A673 (cell line): ENCODE measurements at regions of chr5 and their contacts with region 1.

Region 1: GRCh38 chr5:177973066-177973635 is 22.9 kb downstream of the PROP1 start:
- DNase-seq: no peak
- H3K4me3 ChIP-seq: no peak overlapping the region
- H3K27ac ChIP-seq: no peak overlapping the region
- H3K4me1 ChIP-seq: no peaks in the 10 kb centered on the region
- H3K27me3 ChIP-seq: no peaks in the 10 kb centered on the region
- CTCF ChIP-seq: no peak

Region 2: GRCh38 chr5:176590035-176590717 is 1383.0 kb before region 1 on chr5:
- CTCF ChIA-PET with region 1: no interaction called
- POLR2A ChIA-PET with region 1: no interaction called
- intact Hi-C with region 1: no loop called
- DNase-seq: no peak
- H3K4me3 ChIP-seq: no peak overlapping the region
- H3K27ac ChIP-seq: no peak overlapping the region
- H3K4me1 ChIP-seq: no peaks in the 10 kb centered on the region
- H3K27me3 ChIP-seq: no peaks in the 10 kb centered on the region
- CTCF ChIP-seq: no peak

Region 3: DNA sequence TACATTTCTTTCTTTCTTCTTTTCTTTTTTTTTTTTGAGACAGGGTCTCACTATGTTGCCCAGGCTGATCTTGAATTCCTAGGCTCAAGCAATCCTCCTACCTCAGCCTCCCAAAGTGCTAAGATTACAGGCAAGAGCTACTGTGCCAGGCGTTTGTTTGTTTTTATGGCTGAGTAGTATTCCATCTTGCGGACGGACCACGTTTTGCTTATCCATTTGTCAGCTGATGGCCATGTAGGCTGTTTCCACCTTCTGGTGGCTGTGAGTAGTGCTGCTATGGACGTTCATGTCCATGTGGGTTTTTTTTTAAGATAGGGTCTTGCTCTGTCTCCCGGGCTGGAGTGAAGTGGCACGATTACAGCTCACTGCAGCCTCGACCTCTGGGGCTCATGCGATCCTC is 466.0 kb before region 1 on chr5:
- CTCF ChIA-PET with region 1: no interaction called
- POLR2A ChIA-PET with region 1: interaction called, 16 read pairs
- intact Hi-C with region 1: no loop called
- DNase-seq: no peak
- H3K4me3 ChIP-seq: no peak overlapping the region
- H3K27ac ChIP-seq: no peak overlapping the region
- H3K4me1 ChIP-seq: no peaks in the 10 kb centered on the region
- H3K27me3 ChIP-seq: no peaks in the 10 kb centered on the region
- CTCF ChIP-seq: peak; percentile 22; the same call in 1 of the 2 replicates

Region 4: DNA sequence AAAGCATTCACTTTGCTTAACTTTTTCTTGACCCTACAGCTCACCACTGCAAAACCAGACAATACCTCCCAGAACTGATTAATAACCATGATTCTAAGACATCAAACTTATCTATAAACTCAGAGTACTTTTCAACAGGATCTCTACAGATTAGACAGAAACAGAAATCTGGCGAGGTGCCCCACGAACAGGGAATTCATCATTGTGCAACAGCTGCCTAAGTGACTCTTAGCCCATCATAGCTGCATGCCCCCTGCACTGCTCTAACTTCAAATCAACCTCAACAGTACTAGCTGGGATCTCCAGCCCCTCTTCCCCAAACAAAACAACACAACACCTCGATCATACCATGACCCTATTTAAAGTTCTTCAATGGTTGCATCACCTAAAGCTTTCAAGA is 633.1 kb after region 1 on chr5:
- CTCF ChIA-PET with region 1: no interaction called
- POLR2A ChIA-PET with region 1: no interaction called
- intact Hi-C with region 1: no loop called
- DNase-seq: no peak
- H3K4me3 ChIP-seq: no peak overlapping the region
- H3K27ac ChIP-seq: no peak overlapping the region
- H3K4me1 ChIP-seq: no peaks in the 10 kb centered on the region
- H3K27me3 ChIP-seq: no peaks in the 10 kb centered on the region
- CTCF ChIP-seq: no peak